Activated T-helper 2 cell treated with anti-CD3 and anti-CD28 coated beads, Interferon-gamma antibody, Interleukin-2, Interleukin-4, amounts not matched to agents 10 μg/mL and 5 μg/mL and 100 μg/mL, durations not matched to agents 14 hours and 24 hours and 36 hours (primary cell): ENCODE measurements at regions of chr11 and their contacts with region 1.

Region 1: GRCh38 chr11:3861683-3862082 is 6.2 kb downstream of the STIM1 start:
- DNase-seq: no peak
- H3K4me3 Mint-ChIP-seq: peak overlapping the region; percentile 99
- H3K27ac Mint-ChIP-seq: peak overlapping the region; percentile 91
- H3K4me1 Mint-ChIP-seq: peaks cover 80% of the 10 kb centered on the region
- H3K27me3 Mint-ChIP-seq: no peaks in the 10 kb centered on the region

Region 2: DNA sequence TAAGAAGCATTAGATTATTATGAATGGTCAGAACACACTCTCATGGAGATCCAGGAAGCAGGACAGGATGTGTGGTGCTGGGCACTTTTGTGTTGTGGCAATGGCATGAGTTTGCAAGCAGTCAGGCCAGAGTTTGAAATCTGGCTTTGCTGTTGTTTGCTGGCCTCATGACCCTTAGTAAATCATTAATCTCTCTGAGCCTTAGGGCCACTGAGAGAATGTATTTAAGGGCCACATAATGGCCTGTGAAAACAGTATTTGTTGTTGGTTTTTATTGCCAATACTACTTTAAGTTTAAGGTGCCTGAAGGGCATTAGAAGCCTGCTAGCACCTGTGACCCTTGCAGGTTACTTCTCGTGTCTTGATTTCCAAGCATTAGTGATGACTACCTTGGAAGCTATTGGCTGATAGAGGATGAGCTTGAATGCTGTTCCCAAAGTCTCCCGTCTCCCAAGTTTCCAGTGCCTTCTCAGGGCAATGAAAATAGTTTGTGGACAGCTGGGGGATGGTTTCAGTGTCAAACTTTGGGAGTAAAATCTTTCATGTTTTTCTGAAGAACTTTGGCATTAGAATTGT is 18.4 kb after region 1 on chr11:
- intact Hi-C with region 1: loop called (anchors 1 kb)
- DNase-seq: no peak
- H3K4me3 Mint-ChIP-seq: no peak overlapping the region
- H3K27ac Mint-ChIP-seq: peak overlapping the region; percentile 80
- H3K4me1 Mint-ChIP-seq: peaks cover 55% of the 10 kb centered on the region
- H3K27me3 Mint-ChIP-seq: no peaks in the 10 kb centered on the region

Region 3: GRCh38 chr11:3905080-3905953 is 43.6 kb after region 1 on chr11:
- intact Hi-C with region 1: loop called (anchors 2 kb)
- DNase-seq: peak; percentile 58
- H3K4me3 Mint-ChIP-seq: peak overlapping the region; percentile 1
- H3K27ac Mint-ChIP-seq: peak overlapping the region; percentile 71
- H3K4me1 Mint-ChIP-seq: peaks cover 67% of the 10 kb centered on the region
- H3K27me3 Mint-ChIP-seq: no peaks in the 10 kb centered on the region

Region 4: DNA sequence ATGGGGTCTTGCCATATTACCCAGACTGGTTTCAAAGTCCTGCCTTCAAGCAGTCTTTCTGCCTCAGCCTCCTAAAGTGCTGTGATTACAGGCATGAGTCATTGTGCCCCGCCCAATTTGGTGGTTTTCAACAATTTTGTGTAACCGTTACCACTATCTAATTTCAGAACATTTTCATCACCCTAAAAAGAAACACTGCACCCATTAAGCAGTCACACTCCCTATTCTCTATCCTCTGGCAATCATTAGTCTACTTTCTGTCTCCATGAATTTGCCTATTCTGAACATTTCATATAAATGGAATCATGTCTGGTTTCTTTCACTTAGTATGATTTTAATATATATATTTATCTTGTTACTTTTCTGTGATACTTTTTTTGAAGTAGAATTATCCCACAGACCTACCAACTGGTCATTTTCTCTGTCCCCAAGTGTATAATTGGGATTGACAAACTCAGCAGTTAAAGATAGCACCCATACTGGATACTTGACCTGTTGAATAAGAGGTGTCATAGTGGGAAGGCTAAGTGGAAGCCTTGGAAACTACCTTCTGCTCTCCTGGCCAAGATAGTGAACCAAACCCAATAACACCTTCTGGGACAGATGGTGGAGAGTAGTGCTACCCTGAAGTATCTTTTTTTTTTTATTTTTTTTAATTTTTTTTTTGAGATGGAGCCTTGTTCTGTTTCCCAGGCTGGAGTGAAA is 58.6 kb after region 1 on chr11:
- intact Hi-C with region 1: loop called (anchors 2 kb)
- DNase-seq: peak; percentile 64
- H3K4me3 Mint-ChIP-seq: no peak overlapping the region
- H3K27ac Mint-ChIP-seq: peak overlapping the region; percentile 50
- H3K4me1 Mint-ChIP-seq: peaks cover 58% of the 10 kb centered on the region
- H3K27me3 Mint-ChIP-seq: no peaks in the 10 kb centered on the region

Region 5: GRCh38 chr11:3984896-3985295 is 123.2 kb after region 1 on chr11:
- intact Hi-C with region 1: loop called (anchors 2 kb)
- DNase-seq: no peak
- H3K4me3 Mint-ChIP-seq: no peak overlapping the region
- H3K27ac Mint-ChIP-seq: peak overlapping the region; percentile 73
- H3K4me1 Mint-ChIP-seq: peaks cover 54% of the 10 kb centered on the region
- H3K27me3 Mint-ChIP-seq: no peaks in the 10 kb centered on the region